B cell (primary cell): ENCODE measurements at regions of chr1 and their contacts with region 1.

Region 1: DNA sequence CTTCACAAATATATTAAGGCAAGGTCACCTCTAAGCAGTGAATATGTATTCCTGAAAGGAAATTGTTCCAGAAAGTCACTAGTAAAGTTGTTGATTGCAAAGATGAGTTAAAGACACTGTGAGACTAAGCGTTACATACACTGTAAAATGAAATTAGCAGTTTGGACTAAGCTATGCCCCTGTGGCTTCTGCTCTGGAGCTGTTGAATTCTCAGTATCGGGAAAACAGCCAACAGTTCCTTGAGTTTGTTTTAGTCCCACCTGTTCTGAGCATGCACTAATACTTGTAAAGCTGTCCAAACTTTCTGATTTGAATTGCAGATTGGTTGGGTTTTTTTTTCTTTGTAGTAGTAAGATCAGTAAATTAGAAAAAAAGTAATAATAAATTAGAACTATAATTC is 21.0 kb downstream of the ANGPTL1 start:
- DNase-seq: no peak
- ATAC-seq: no peak
- H3K4me3 ChIP-seq: no peak overlapping the region
- H3K4me3 Mint-ChIP-seq: no peak overlapping the region
- H3K27ac ChIP-seq: no peak overlapping the region
- H3K27ac Mint-ChIP-seq: peak overlapping the region; percentile 32
- H3K4me1 ChIP-seq: no peaks in the 10 kb centered on the region
- H3K4me1 Mint-ChIP-seq: peaks cover 2% of the 10 kb centered on the region
- H3K27me3 ChIP-seq: no peaks in the 10 kb centered on the region
- H3K27me3 Mint-ChIP-seq: no peaks in the 10 kb centered on the region
- CTCF ChIP-seq: no peak

Region 2: GRCh38 chr1:178885869-178886268 is 36.0 kb after region 1 on chr1:
- CTCF ChIA-PET with region 1: interaction called, 3 read pairs
- POLR2A ChIA-PET with region 1: no interaction called
- intact Hi-C with region 1: loop called (anchors 5 kb)
- DNase-seq: no peak
- ATAC-seq: no peak
- H3K4me3 ChIP-seq: no peak overlapping the region
- H3K4me3 Mint-ChIP-seq: no peak overlapping the region
- H3K27ac ChIP-seq: peak overlapping the region in 1 of 2 donors; percentile 43
- H3K27ac Mint-ChIP-seq: no peak overlapping the region
- H3K4me1 ChIP-seq: no peaks in the 10 kb centered on the region
- H3K4me1 Mint-ChIP-seq: peaks cover 5% of the 10 kb centered on the region
- H3K27me3 ChIP-seq: no peaks in the 10 kb centered on the region
- H3K27me3 Mint-ChIP-seq: no peaks in the 10 kb centered on the region
- CTCF ChIP-seq: no peak